ENCODE measurements at regions of chr17 and their contacts with region 1.

Region 1: DNA sequence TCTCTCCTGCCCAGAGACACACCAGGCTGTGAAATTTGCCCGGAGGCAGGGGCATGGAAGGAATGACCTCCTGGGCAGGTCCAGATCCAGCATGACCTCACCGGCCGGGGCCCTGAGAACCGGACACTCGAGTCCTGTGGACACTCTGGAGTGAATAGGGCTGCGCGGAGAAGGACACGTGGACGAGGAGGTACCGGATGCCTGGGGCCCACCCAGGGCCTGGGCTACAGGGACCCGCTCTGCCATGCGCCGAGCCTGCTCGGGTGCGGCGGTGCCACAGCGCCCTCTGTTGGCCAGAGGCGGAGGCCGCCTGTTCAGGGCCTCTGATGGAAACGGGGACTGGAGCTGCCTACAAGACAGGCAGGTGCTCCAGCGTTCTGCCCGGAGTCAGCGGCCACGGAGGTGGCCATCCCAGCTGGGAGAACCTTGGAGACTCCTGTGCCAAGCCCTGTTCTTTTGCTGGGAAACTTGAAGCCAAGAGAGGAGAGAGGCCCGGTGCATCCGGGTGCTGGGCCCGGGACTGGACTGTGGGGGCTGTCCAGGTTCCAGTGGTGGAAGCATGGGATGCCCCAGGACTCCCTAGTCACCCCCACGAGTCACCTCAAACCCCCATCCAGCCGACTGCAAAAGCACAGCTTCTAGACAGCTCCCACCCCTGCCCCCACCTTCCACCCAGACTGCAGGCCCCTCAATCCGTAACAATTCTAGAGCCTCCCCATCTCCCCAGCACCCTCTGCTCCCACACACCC is 19.3 kb upstream of the NXPH3 start:
- DNase-seq: no peak
- H3K4me3 ChIP-seq: no peak overlapping the region
- H3K27ac ChIP-seq: no peak overlapping the region
- H3K27me3 ChIP-seq: peaks cover 9% of the 10 kb centered on the region
- CTCF ChIP-seq: peak; percentile 98

Region 2: DNA sequence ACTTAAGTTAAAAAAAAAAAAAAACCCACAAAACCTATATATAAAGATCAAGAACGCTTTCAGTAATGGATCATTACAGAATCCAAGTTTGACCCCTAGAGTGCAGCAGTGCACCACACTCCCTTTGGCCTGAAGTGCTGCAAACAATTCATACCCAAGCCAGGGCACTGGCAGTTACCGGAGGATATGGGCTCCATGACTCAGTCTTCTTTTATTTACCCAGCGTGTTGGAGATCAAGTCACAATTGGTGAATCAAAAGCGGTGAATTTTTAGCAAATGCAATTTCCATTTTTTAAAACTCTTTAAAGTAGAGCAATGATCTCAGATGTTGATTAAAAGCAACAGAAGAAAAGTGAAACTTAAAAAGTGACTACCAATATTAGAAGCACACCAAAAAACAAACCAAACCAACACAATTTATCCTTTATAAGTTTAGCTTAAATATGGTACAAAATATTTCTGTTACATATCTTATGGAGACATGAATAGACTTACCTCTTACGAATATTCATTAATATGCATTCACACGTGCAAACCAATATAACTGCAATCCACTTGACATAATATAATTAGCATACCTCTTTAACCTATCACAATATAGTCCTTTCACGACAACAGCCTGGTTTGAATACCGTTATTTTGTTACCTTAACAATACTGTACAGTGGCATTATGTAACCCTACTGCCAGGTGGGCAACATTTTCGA is 240.7 kb before region 1 on chr17:
- CTCF ChIA-PET with region 1: interaction called, 30 read pairs
- POLR2A ChIA-PET with region 1: no interaction called
- DNase-seq: peak; percentile 68
- H3K4me3 ChIP-seq: no peak overlapping the region
- H3K27ac ChIP-seq: no peak overlapping the region
- H3K27me3 ChIP-seq: no peaks in the 10 kb centered on the region
- CTCF ChIP-seq: peak; percentile 86

Region 3: GRCh38 chr17:49407981-49408501 is 148.4 kb before region 1 on chr17:
- CTCF ChIA-PET with region 1: interaction called, 40 read pairs
- POLR2A ChIA-PET with region 1: no interaction called
- DNase-seq: peak; percentile 23
- H3K4me3 ChIP-seq: no peak overlapping the region
- H3K27ac ChIP-seq: peak overlapping the region; percentile 12
- H3K27me3 ChIP-seq: no peaks in the 10 kb centered on the region
- CTCF ChIP-seq: peak; percentile 83

Region 4: DNA sequence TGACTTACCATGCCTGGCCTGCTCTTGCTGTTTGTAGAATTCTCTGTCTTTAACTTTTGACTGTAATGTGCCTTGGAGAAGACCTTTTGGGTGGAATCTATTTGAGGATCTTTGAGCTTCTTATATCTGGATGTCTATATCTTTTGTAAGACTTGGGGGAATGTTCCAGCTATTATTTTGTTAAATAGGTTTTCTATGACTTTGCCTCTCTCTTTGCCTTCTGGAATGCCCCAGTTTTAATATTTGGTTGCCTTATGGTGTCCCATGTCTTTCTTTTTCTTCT is 131.5 kb before region 1 on chr17:
- CTCF ChIA-PET with region 1: interaction called, 20 read pairs
- POLR2A ChIA-PET with region 1: no interaction called
- DNase-seq: no peak
- H3K4me3 ChIP-seq: no peak overlapping the region
- H3K27ac ChIP-seq: no peak overlapping the region
- H3K27me3 ChIP-seq: peaks cover 3% of the 10 kb centered on the region
- CTCF ChIP-seq: no peak

Region 5: DNA sequence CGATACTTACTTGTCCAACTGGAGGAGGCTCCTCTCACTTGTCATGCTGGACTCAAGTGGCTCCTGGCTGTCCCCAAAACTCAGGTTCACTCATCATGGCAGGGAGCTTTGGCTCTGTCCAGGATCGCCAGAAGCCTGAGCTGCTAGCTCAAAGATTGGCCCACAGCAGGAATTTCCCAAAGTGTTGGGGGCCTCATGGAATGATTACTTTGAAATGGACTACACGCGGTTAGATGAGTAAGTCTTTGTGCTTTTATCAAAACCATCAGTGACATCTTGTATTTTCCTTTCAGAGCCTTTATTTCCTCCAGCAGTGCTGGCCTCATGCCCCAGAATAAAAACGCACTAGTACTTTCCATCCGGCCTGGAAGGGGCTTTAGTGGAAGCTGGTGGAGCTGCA is 112.5 kb before region 1 on chr17:
- CTCF ChIA-PET with region 1: interaction called, 119 read pairs
- POLR2A ChIA-PET with region 1: no interaction called
- DNase-seq: no peak
- H3K4me3 ChIP-seq: no peak overlapping the region
- H3K27ac ChIP-seq: no peak overlapping the region
- H3K27me3 ChIP-seq: peaks cover 48% of the 10 kb centered on the region
- CTCF ChIP-seq: no peak

Region 6: DNA sequence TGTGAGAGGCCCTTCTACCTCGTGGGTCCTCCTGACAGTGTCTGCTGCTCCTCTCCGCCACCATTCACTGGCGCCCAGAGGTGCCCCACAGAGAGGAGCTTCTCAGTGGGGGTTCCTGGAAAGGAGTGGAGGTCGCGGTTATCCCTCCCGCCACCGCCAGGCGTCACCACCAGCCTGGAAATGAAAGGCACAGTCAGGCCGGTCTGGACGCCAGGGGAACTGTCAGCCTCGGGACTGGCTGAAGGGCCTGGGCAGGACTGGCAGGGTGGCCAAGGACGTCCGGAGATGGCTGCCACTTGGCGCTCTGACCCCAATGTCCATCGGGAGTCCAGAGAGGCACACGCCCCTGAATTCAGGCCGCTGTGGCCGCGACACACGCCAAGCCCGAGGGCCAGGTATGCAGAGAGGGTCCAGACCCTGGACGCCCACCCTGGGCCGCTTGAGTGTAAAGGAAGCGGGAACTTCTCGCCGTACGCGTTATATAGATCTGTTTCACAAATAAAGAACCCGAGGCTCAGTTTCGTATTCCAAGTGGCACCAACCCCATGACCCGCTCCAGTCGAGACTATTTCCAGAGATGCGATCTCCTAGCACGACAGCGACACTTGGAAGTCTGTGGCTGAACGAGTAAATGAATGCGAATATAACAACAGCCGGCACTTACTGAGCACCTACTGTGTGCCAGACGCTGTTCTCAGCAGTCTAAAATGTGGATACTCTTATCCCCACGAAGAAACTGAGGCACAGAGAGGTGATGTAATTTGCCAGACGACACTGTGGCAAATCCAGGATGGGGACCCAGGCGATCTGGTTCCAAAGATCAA is 11.7 kb after region 1 on chr17:
- CTCF ChIA-PET with region 1: interaction called, 35 read pairs
- POLR2A ChIA-PET with region 1: no interaction called
- DNase-seq: peak; percentile 16
- H3K4me3 ChIP-seq: peak overlapping the region; percentile 45
- H3K27ac ChIP-seq: no peak overlapping the region
- H3K27me3 ChIP-seq: peaks cover 32% of the 10 kb centered on the region
- CTCF ChIP-seq: peak; percentile 91

Measured in AG04450 (cell line).